Mammary epithelial cell (primary cell): ENCODE measurements at regions of chr6 and their contacts with region 1.

Region 1: GRCh38 chr6:76852776-76853175 is 610.5 kb downstream of the HTR1B start:
- DNase-seq: no peak
- H3K4me3 ChIP-seq: no peak overlapping the region
- H3K27ac ChIP-seq: no peak overlapping the region
- H3K4me1 ChIP-seq: no peaks in the 10 kb centered on the region
- H3K27me3 ChIP-seq: no peaks in the 10 kb centered on the region
- CTCF ChIP-seq: no peak

Region 2: GRCh38 chr6:76057469-76057868 is 795.3 kb before region 1 on chr6:
- CTCF ChIA-PET with region 1: no interaction called
- dilution Hi-C with region 1: no loop called
- in situ Hi-C with region 1: no loop called
- intact Hi-C with region 1: no loop called
- DNase-seq: no peak
- H3K4me3 ChIP-seq: no peak overlapping the region
- H3K27ac ChIP-seq: no peak overlapping the region
- H3K4me1 ChIP-seq: no peaks in the 10 kb centered on the region
- H3K27me3 ChIP-seq: no peaks in the 10 kb centered on the region
- CTCF ChIP-seq: no peak

Region 3: DNA sequence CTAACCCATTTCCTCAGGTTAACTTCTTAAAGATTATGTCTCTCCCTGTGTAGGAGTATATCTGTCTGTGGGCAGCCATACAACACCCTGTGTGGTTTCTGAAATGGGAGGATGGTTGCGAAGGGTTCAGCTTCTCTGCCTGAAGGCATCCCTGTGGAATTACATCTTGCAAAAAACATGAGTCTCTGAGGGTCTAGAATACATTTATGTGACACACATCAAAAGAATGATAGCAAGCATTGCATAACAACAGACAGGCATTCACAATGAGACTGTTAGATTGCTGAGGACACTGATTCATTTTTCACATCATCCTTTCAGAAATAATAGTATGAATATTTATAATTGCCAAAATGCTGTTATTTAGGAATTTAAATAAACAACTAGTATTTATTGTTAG is 60.4 kb before region 1 on chr6:
- CTCF ChIA-PET with region 1: no interaction called
- dilution Hi-C with region 1: no loop called
- in situ Hi-C with region 1: no loop called
- intact Hi-C with region 1: loop called (anchors 10 kb)
- DNase-seq: peak; percentile 56
- H3K4me3 ChIP-seq: no peak overlapping the region
- H3K27ac ChIP-seq: no peak overlapping the region
- H3K4me1 ChIP-seq: no peaks in the 10 kb centered on the region
- H3K27me3 ChIP-seq: no peaks in the 10 kb centered on the region
- CTCF ChIP-seq: no peak

Region 4: GRCh38 chr6:77015350-77015749 is 162.6 kb after region 1 on chr6:
- CTCF ChIA-PET with region 1: no interaction called
- dilution Hi-C with region 1: no loop called
- in situ Hi-C with region 1: no loop called
- intact Hi-C with region 1: no loop called
- DNase-seq: peak; percentile 20
- H3K4me3 ChIP-seq: no peak overlapping the region
- H3K27ac ChIP-seq: no peak overlapping the region
- H3K4me1 ChIP-seq: no peaks in the 10 kb centered on the region
- H3K27me3 ChIP-seq: no peaks in the 10 kb centered on the region
- CTCF ChIP-seq: no peak